ENCODE measurements at regions of chr11 and their contacts with region 1.

Region 1: DNA sequence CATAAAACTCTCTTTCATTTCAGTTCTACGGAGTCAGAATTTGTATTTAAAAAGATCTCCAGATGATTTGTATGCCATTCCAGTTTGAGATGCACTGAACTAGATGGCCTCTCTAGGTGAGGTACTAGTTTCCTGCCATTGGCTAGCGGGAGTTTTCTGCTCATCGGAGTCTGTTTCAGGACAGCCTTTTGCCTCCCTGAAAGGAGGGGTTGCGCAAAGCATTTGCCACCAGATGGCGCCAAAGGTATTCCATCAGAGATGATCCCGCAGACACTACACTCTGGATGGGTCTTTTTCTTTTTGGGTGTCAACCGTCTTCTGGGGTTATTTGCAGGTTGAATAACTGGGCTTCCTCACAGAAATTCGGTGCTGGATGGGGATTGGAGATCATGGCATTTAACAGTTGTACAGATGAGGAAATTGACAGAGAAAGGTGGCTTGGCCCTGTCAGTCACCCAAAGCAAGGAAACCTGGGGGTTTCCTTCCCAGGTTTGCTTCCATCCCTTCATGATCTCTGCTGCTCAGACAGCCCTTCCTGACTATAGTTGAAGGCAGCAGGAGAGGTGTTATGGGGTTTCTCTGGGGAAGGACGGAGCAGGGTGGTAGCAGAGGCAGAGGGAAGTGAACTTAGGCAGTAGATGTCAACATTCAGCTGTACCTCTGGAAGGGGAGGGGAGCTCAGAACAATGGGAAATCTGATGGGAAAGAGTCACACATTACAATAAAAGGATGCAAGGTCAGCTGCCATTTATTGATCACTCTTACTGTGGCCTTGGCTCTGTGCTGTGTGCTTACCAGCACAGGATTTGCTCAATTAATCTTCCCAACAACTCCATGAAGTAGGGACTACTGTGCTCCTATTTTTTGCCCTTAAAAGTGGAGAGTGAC is 81.6 kb downstream of the CCDC81 start:
- DNase-seq: peak; percentile 87
- H3K4me3 ChIP-seq: no peak overlapping the region
- H3K27ac ChIP-seq: no peak overlapping the region
- H3K4me1 ChIP-seq: peaks cover 0 to 10% (median 5%) of the 10 kb centered on the region in 4 donors
- H3K27me3 ChIP-seq: no peaks in the 10 kb centered on the region
- CTCF ChIP-seq: peak; percentile 80 to 93 (median 92)
- EP300 ChIP-seq: no peak
- POLR2A ChIP-seq: no peak

Region 2: DNA sequence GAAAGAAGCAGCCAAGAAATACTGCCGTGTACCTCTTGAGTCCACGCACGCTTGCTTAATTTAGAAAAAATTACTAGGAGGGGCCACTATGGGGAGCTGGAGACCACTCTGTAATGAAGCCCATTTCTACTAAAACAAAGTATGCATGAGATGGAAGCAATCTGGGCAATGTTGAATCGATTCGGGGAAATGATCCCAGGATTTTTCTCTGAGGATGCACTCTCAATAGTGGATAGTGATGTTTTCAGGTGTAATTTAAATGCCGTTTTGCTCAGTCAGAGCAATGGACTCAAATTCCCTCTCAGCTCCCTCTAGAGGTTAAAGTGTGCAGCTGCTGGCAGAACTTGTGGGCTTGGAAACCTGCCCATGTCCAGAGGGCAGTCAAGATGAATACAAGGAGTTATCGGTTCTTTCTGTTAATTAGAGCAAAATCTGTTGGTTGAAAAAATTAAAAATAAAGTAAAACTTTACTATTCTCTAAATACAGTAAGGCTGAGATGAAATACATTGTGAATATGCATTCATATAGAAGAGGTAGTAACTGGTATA is 152.0 kb after region 1 on chr11:
- in situ Hi-C with region 1: loop called in 2 of 4 experiments (anchors 10 to 25 kb)
- intact Hi-C with region 1: no loop called
- DNase-seq: peak; percentile 75
- H3K4me3 ChIP-seq: no peak overlapping the region
- H3K27ac ChIP-seq: peak overlapping the region; percentile 2 to 56 (median 34)
- H3K4me1 ChIP-seq: peaks cover 7 to 20% (median 10%) of the 10 kb centered on the region in 4 donors
- H3K27me3 ChIP-seq: no peaks in the 10 kb centered on the region
- CTCF ChIP-seq: peak; percentile 85 to 90 (median 87)
- EP300 ChIP-seq: no peak
- POLR2A ChIP-seq: no peak

Region 3: GRCh38 chr11:86811637-86812321 is 355.5 kb after region 1 on chr11:
- in situ Hi-C with region 1: loop called (anchors 5 kb)
- intact Hi-C with region 1: no loop called
- DNase-seq: no peak
- H3K4me3 ChIP-seq: no peak overlapping the region
- H3K27ac ChIP-seq: peak overlapping the region in 3 of 4 donors; percentile 20 to 84 (median 82)
- H3K4me1 ChIP-seq: peaks cover 0 to 29% (median 16%) of the 10 kb centered on the region in 4 donors
- H3K27me3 ChIP-seq: no peaks in the 10 kb centered on the region
- CTCF ChIP-seq: no peak
- EP300 ChIP-seq: no peak
- POLR2A ChIP-seq: no peak

Region 4: DNA sequence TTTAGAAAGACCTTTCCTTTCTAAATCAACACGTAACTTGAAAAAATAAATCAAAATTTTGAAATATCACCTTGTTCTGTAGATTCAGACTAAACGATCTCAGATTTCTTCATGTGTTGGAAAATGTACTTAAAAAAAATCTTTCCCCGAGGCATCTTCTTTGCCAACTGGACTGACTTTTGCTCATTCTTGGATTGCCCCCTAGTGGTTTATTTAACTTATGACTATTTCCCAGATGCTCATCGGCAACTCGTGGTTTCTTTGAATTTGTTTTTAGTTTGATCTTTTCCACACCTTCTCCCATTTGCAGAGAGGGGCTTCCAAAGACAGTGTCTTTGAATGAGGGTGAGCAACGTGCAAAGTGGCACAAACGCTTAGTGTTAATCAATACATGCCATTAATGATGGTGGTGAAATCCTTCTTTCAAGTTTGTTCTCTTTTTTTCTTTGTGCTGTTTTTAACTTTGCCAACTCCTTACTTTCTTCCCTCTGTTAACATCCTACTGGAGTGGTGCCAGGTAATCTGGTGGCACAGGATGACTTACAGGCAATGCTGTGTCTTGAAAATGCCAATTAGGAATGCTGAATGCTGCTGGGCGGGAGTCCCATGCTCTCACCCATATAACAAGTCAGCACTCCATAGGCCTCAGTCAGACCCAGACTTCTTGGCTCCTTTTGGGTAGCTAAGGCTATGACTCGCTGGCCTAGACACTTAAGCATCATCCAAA is 362.3 kb after region 1 on chr11:
- in situ Hi-C with region 1: loop called (anchors 5 kb)
- intact Hi-C with region 1: loop called (anchors 2 kb)
- DNase-seq: no peak
- H3K4me3 ChIP-seq: no peak overlapping the region
- H3K27ac ChIP-seq: peak overlapping the region in 3 of 4 donors; percentile 70 to 84 (median 82)
- H3K4me1 ChIP-seq: peaks cover 0 to 25% (median 19%) of the 10 kb centered on the region in 4 donors
- H3K27me3 ChIP-seq: no peaks in the 10 kb centered on the region
- CTCF ChIP-seq: peak; percentile 75 to 83 (median 78)
- EP300 ChIP-seq: no peak
- POLR2A ChIP-seq: no peak

Region 5: DNA sequence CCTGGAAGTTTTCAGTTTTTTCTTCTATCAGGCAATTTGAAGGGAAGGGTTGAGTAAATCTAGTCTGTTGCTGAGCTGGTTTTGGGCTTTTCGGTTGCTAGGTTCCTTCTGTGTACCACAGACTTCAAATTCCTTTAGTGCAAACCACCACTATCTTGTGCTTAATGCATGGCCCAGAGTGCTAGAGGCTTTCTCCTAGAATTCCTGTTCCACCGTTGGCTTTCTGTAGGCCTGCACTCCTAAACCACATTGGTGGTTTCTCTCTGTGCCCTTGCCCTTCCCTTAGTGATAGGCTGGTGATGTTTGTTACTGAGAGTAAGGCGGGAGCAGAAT is 1928.3 kb after region 1 on chr11:
- in situ Hi-C with region 1: no loop called
- intact Hi-C with region 1: loop called (anchors 5 kb)
- DNase-seq: no peak
- H3K4me3 ChIP-seq: no peak overlapping the region
- H3K27ac ChIP-seq: peak overlapping the region in 3 of 4 donors; percentile 31 to 37 (median 33)
- H3K4me1 ChIP-seq: peaks cover 0 to 4% (median 0%) of the 10 kb centered on the region in 4 donors
- H3K27me3 ChIP-seq: no peaks in the 10 kb centered on the region
- CTCF ChIP-seq: no peak
- EP300 ChIP-seq: no peak
- POLR2A ChIP-seq: no peak